ENCODE measurements at regions of chr3 and their contacts with region 1.

Region 1: GRCh38 chr3:49411968-49412631 is at the starts of genes RHOA and TCTA:
- DNase-seq: peak; percentile 96 to 100 (median 99)
- ATAC-seq: peak; percentile 87 to 89
- H3K4me3 Mint-ChIP-seq: peak within 1 kb of the TSS; percentile 80 to 95 (median 93)
- H3K27ac Mint-ChIP-seq: peak within 1 kb of the TSS; percentile 91 to 96 (median 95)
- H3K4me1 Mint-ChIP-seq: peaks cover 35 to 83% (median 69%) of the 10 kb centered on the region in 4 donors
- H3K27me3 Mint-ChIP-seq: no peaks in the 10 kb centered on the region
- polyA plus RNA-seq, gene RHOA: 478 to 683 (median 552) TPM
- polyA plus RNA-seq, gene TCTA: 37.6 to 48.8 (median 45.5) TPM

Region 2: DNA sequence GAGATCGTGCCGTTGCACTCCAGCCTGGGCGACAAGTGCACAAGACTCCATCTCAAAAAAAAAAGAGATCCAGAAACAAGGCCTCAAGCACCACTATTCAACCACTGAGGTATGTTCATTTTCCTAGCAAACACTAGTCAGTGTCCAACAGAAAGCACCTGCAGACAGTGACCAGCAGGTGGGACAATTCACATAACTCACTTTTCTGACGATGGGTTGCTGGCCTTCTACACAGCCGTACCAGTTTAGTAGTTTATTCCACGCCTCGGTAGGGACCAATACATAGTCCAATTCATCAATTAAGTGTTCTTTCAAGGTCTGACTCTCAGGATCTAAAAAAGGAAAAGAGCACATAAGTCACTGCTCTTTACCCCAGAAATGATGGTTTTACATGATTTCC is 84.6 kb before region 1 on chr3:
- POLR2A ChIA-PET with region 1: no interaction called
- DNase-seq: no peak
- ATAC-seq: no peak
- H3K4me3 Mint-ChIP-seq: no peak overlapping the region
- H3K27ac Mint-ChIP-seq: peak overlapping the region in 1 of 10 donors; percentile 9
- H3K4me1 Mint-ChIP-seq: peaks cover 5 to 33% (median 8%) of the 10 kb centered on the region in 4 donors
- H3K27me3 Mint-ChIP-seq: no peaks in the 10 kb centered on the region

Region 3: DNA sequence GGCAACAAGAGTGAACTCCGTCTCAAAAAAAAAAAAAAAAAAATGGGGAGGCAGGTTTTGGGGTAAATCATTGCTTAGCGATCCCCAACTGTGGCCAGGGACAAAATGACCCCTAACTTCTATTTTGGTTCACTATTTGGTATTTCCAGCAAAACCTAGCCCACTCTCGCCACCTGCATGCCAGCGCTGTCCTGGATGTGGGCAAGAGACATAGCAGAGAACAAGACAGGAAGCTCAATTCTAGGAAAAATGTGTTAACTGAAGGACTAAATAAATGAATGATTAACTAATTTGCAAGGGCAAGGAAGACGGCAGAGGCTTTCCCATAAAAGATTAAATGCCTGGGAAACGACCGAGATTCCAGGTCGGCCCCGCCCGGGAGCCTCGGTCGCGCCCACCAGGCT is 16.6 kb after region 1 on chr3:
- POLR2A ChIA-PET with region 1: interaction called, 50 read pairs
- DNase-seq: no peak
- ATAC-seq: peak; percentile 15
- H3K4me3 Mint-ChIP-seq: peak overlapping the region; percentile 90 to 96 (median 92)
- H3K27ac Mint-ChIP-seq: peak overlapping the region; percentile 88 to 98 (median 94)
- H3K4me1 Mint-ChIP-seq: peaks cover 12 to 29% (median 22%) of the 10 kb centered on the region in 4 donors
- H3K27me3 Mint-ChIP-seq: no peaks in the 10 kb centered on the region

Region 4: GRCh38 chr3:49445381-49445780 is 33.3 kb after region 1 on chr3:
- POLR2A ChIA-PET with region 1: interaction called, 16 read pairs
- DNase-seq: no peak
- ATAC-seq: no peak
- H3K4me3 Mint-ChIP-seq: peak overlapping the region in 1 of 10 donors; percentile 19
- H3K27ac Mint-ChIP-seq: peak overlapping the region in 7 of 10 donors; percentile 34 to 81 (median 46)
- H3K4me1 Mint-ChIP-seq: peaks cover 3 to 28% (median 16%) of the 10 kb centered on the region in 4 donors
- H3K27me3 Mint-ChIP-seq: no peaks in the 10 kb centered on the region

Region 5: GRCh38 chr3:49469936-49470713 is 58.0 kb after region 1 on chr3 and contains the start of gene DAG1:
- POLR2A ChIA-PET with region 1: interaction called, 20 read pairs
- DNase-seq: peak; percentile 91 to 97 (median 94)
- ATAC-seq: peak; percentile 85 to 87
- H3K4me3 Mint-ChIP-seq: peak within 1 kb of the TSS; percentile 84 to 94 (median 91)
- H3K27ac Mint-ChIP-seq: peak within 1 kb of the TSS; percentile 90 to 97 (median 95)
- H3K4me1 Mint-ChIP-seq: peaks cover 15 to 34% (median 21%) of the 10 kb centered on the region in 4 donors
- H3K27me3 Mint-ChIP-seq: no peaks in the 10 kb centered on the region
- polyA plus RNA-seq, gene DAG1: 4.6 to 6.4 (median 4.7) TPM